ENCODE measurements at regions of chr6 and their contacts with region 1.

Region 1: GRCh38 chr6:80163658-80164187 is 57.3 kb downstream of the BCKDHB start:
- DNase-seq: peak; percentile 87
- ATAC-seq: peak; percentile 97
- H3K4me3 ChIP-seq: no peak overlapping the region
- H3K27ac ChIP-seq: peak overlapping the region; percentile 59; the same call in 1 of the 2 replicates
- H3K4me1 ChIP-seq: peaks cover 3% of the 10 kb centered on the region
- H3K27me3 ChIP-seq: no peaks in the 10 kb centered on the region
- CTCF ChIP-seq: no peak
- POLR2A ChIP-seq: no peak
- RAD21 ChIP-seq: no peak

Region 2: DNA sequence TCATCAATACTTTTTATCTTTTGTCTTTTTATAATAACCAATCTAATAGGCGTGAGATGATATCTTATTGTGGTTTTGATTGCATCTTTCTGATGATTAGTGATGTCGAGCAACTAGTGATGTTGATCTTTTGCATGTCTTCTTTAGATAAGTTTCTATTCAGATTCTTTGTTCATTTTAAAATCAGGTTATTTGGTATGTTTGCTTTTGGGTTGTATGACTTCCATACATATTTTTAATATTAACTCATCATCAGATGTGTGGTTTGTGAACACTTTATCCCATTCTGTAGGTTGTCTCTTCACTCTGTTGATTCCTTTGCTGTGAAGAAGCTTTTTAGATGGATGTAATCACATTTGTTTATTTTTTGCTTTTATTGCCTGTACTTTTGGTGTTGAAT is 238.5 kb after region 1 on chr6:
- CTCF ChIA-PET with region 1: no interaction called
- POLR2A ChIA-PET with region 1: no interaction called
- dilution Hi-C with region 1: no loop called
- in situ Hi-C with region 1: no loop called
- intact Hi-C with region 1: no loop called
- DNase-seq: peak; percentile 58
- ATAC-seq: no peak
- H3K4me3 ChIP-seq: no peak overlapping the region
- H3K27ac ChIP-seq: no peak overlapping the region
- H3K4me1 ChIP-seq: no peaks in the 10 kb centered on the region
- H3K27me3 ChIP-seq: no peaks in the 10 kb centered on the region
- CTCF ChIP-seq: no peak
- POLR2A ChIP-seq: no peak
- RAD21 ChIP-seq: no peak

Region 3: GRCh38 chr6:81562169-81562568 is 1398.4 kb after region 1 on chr6:
- CTCF ChIA-PET with region 1: interaction called, 10 read pairs
- POLR2A ChIA-PET with region 1: no interaction called
- dilution Hi-C with region 1: no loop called
- in situ Hi-C with region 1: no loop called
- intact Hi-C with region 1: no loop called
- DNase-seq: peak; percentile 89
- ATAC-seq: peak; percentile 97
- H3K4me3 ChIP-seq: no peak overlapping the region; the same call in 1 of the 2 replicates
- H3K27ac ChIP-seq: no peak overlapping the region
- H3K4me1 ChIP-seq: no peaks in the 10 kb centered on the region; the same call in 1 of the 2 replicates
- H3K27me3 ChIP-seq: no peaks in the 10 kb centered on the region
- CTCF ChIP-seq: no peak
- POLR2A ChIP-seq: no peak
- RAD21 ChIP-seq: no peak

Measured in IMR-90 (cell line).